Common myeloid progenitor, CD34-positive (primary cell): ENCODE measurements at regions of chr16 and their contacts with region 1.

Region 1: DNA sequence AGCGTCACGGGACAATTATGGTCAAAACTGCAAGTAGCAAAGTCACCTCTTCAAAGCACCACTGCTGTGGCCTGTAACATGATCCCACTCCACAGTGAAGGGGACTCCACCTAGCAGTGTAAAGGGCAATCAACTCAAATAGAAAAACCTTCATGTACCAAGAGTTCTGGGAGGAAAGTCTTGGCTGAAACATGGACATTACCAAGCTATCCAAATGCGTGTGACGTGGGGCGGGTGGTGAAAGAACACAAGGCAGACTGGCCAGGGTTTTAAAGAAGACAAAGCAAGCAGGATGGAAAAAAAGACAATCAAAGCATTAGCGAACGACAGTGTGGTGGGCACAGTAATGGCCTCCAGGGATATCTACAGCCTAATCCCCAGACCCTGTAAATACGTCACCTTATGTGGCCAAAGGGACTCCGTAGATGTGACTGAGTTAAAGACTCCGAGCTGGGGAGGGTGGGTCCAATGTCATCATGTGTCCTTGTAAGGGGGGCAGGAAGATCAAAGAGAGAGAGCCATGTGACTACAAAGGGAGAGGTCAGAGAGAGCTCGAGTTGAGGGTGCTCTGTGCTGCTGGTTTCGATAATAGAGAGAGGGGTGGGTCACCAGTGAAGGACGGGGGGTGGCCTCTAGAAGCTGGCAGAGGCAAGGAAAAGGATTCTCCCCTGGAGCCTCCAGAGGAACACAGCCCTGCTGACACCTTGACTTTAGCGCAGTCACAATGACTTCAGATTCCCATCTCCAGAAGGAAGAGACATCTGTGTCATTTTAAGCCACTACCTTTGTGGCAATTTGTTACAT is 6.0 kb downstream of the HSDL1 start:
- DNase-seq: no peak
- H3K4me3 ChIP-seq: no peak overlapping the region
- H3K27ac ChIP-seq: peak overlapping the region in 1 of 2 experiments; percentile 82
- H3K4me1 ChIP-seq: peaks cover 0 to 7% (median 3%) of the 10 kb centered on the region in 4 experiments
- H3K27me3 ChIP-seq: peaks cover 0 to 4% (median 0%) of the 10 kb centered on the region in 5 experiments

Region 2: DNA sequence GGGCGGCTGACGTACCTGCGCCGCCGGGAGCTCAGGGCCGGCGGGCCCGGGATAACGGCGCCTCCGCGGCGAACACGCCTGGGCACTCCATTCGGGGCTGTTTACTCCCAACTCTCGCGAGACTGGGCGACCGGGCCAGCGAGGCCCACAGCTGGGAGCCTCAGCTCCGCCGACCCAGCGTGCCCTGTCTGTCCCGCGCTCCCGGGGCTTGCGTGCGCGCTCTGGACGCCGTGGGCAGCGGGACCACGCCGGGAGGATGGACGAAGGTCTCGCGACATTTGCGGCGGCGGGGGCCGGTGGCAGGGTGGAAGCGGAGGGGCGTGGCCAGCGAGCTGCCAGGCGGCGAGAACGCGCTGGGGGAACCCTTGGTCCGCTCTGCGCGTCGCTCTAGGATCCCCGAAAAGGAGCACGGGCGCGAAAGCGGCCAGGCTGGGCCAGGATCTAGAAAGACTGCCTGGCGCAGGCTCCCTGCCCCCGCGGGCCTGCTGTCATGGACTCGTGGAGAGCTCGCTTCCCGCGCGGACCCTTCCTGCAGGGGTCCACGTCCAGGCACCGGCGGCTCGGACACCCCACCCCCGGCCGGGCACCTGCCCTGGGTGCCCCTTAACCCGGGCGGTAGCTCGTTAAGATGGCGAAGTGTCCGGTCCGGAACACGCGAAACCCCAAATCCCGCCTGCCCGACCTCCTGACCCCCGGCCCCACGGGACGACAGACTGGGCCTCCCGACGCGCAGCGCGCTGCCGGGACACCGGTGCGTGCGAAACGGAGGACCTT is 22.1 kb before region 1 on chr16 and contains the start of gene MBTPS1:
- CTCF ChIA-PET with region 1: interaction called, 13 read pairs
- POLR2A ChIA-PET with region 1: no interaction called
- DNase-seq: peak; percentile 97 to 98 (median 98)
- H3K4me3 ChIP-seq: peak within 1 kb of the TSS; percentile 71 to 94 (median 89)
- H3K27ac ChIP-seq: peak within 1 kb of the TSS; percentile 83 to 93
- H3K4me1 ChIP-seq: peaks cover 8 to 31% (median 21%) of the 10 kb centered on the region in 4 experiments
- H3K27me3 ChIP-seq: peaks cover 0 to 5% (median 3%) of the 10 kb centered on the region in 5 experiments